Endothelial cell of umbilical vein (primary cell): ENCODE measurements at regions of chr17 and their contacts with region 1.

Region 1: GRCh38 chr17:29931231-29931932 is 1.4 kb upstream of the SSH2 start:
- DNase-seq: peak; percentile 86
- H3K4me3 ChIP-seq: peak overlapping the region in 1 of 3 experiments; percentile 66
- H3K27ac ChIP-seq: no peak overlapping the region
- H3K4me1 ChIP-seq: peaks cover 34% of the 10 kb centered on the region
- H3K27me3 ChIP-seq: no peaks in the 10 kb centered on the region
- CTCF ChIP-seq: peak; percentile 81 to 87
- POLR2A ChIP-seq: no peak

Region 2: DNA sequence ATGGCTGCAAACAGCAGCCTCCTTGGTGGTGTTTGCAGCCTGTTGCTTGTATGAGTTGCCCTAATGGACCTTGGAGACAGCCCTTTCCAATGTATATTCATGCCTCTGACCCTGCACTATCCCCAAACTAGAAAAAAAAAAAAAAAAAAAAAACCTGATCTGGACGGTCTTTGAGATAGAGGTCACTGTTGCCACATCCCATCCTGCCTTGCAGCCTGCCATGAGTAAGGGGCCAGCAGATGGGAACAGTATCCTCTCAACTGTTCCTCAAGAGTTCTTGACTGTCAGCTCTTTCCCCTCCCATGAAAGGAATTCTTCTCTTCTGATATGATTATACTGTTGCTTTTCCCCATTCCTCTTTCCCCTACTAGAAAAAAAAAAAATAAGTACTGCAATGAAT is 153.7 kb before region 1 on chr17:
- CTCF ChIA-PET with region 1: interaction called, 12 read pairs
- POLR2A ChIA-PET with region 1: interaction called, 4 read pairs
- dilution Hi-C with region 1: no loop called
- intact Hi-C with region 1: no loop called
- DNase-seq: no peak
- H3K4me3 ChIP-seq: no peak overlapping the region
- H3K27ac ChIP-seq: no peak overlapping the region
- H3K4me1 ChIP-seq: peaks cover 6% of the 10 kb centered on the region
- H3K27me3 ChIP-seq: no peaks in the 10 kb centered on the region
- CTCF ChIP-seq: no peak
- POLR2A ChIP-seq: no peak

Region 3: DNA sequence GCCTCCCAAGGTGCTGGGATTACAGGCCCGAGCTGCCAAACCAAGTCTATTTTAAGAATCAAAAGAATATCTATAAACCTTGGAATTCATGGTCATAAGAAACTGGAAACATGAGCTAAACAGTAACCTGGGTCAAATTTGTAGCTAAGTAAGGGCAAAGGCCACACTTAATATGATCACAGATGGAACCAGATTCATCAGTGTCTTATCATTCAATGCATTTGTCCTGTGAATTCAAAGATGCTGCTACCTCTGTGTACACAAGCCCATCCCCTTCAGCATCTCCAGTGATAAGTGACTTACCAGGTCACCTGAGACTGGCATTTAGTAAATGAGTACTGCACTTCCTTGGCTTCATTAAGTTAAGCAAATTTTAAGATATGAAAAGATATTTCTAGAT is 109.5 kb before region 1 on chr17:
- CTCF ChIA-PET with region 1: interaction called, 10 read pairs
- POLR2A ChIA-PET with region 1: no interaction called
- dilution Hi-C with region 1: no loop called
- intact Hi-C with region 1: no loop called
- DNase-seq: no peak
- H3K4me3 ChIP-seq: no peak overlapping the region
- H3K27ac ChIP-seq: no peak overlapping the region
- H3K4me1 ChIP-seq: no peaks in the 10 kb centered on the region
- H3K27me3 ChIP-seq: no peaks in the 10 kb centered on the region
- CTCF ChIP-seq: no peak
- POLR2A ChIP-seq: no peak

Region 4: GRCh38 chr17:29844339-29845048 is 86.9 kb before region 1 on chr17:
- CTCF ChIA-PET with region 1: interaction called, 28 read pairs
- POLR2A ChIA-PET with region 1: no interaction called
- dilution Hi-C with region 1: no loop called
- intact Hi-C with region 1: no loop called
- DNase-seq: peak; percentile 31
- H3K4me3 ChIP-seq: no peak overlapping the region
- H3K27ac ChIP-seq: no peak overlapping the region
- H3K4me1 ChIP-seq: peaks cover 7% of the 10 kb centered on the region
- H3K27me3 ChIP-seq: no peaks in the 10 kb centered on the region
- CTCF ChIP-seq: no peak
- POLR2A ChIP-seq: no peak

Region 5: DNA sequence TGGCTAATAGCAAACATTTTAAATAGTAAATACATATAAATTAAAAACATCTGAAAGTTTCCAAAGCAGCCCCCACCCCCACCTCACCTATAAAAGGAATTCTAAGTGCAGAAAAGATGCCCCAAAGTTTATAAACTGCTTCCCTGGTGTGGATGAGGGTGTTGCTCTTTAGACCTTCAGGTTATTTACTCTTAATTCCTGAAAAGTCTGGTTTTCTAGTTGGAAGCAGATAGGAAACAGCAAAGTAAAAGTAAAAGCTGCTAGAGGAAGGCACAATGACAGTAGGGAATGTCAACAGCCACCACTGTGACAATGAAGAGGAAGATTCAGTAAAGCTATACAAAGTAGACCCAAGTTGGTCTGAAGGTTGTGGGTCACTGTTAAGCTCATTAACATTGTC is 39.2 kb before region 1 on chr17:
- CTCF ChIA-PET with region 1: interaction called, 10 read pairs
- POLR2A ChIA-PET with region 1: interaction called, 3 read pairs
- dilution Hi-C with region 1: no loop called
- intact Hi-C with region 1: no loop called
- DNase-seq: no peak
- H3K4me3 ChIP-seq: no peak overlapping the region
- H3K27ac ChIP-seq: no peak overlapping the region
- H3K4me1 ChIP-seq: peaks cover 11% of the 10 kb centered on the region
- H3K27me3 ChIP-seq: no peaks in the 10 kb centered on the region
- CTCF ChIP-seq: no peak
- POLR2A ChIP-seq: no peak

Region 6: DNA sequence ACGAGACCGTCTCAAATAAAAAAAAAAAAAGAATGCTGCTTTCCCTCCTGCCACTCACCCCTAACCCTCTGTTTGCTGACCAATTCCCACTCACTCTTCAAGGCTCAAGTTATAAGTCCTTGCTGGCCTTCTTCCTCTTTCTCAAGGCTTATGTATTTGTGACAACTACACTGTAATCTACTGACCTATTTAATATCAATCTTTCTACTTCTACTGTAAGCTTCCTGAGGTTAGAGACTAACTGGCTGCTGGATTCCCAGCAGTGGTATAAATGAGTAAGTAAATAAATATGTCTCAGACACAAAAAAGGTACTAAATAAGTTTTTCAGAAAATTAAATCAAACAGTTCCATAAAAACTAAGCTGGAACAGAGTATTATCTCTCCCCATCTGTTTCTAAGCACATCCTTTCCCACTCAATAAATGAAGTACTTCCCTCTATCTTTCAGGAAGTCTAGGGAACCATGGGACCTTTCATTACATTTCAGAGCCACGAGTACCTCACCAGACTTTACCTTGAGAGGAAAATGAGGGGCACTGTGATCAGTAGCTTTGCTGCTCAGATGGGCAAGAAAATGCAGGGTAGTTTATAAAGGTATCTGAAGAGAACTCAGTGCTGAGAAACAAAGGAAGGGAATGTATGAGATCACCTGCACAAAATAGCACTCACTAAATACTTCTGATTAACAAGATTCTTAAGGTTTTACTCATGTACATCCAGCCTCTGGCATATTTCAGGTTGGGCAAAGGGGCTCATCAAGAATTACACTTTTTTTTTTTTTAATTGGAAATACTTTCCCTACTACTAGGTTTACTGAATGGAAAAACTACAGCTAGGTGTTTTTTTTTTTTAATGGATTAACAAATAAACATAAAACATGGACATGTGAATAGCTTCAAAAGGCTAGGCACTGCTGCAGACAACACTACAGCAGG is 12.2 kb before region 1 on chr17:
- CTCF ChIA-PET with region 1: interaction called, 21 read pairs
- POLR2A ChIA-PET with region 1: no interaction called
- dilution Hi-C with region 1: no loop called
- intact Hi-C with region 1: no loop called
- DNase-seq: peak; percentile 69
- H3K4me3 ChIP-seq: no peak overlapping the region
- H3K27ac ChIP-seq: peak overlapping the region; percentile 70
- H3K4me1 ChIP-seq: peaks cover 7% of the 10 kb centered on the region
- H3K27me3 ChIP-seq: no peaks in the 10 kb centered on the region
- CTCF ChIP-seq: no peak
- POLR2A ChIP-seq: no peak

Region 7: GRCh38 chr17:30093463-30094147 is 162.2 kb after region 1 on chr17:
- CTCF ChIA-PET with region 1: interaction called, 91 read pairs
- POLR2A ChIA-PET with region 1: no interaction called
- dilution Hi-C with region 1: no loop called
- intact Hi-C with region 1: loop called (anchors 10 kb)
- DNase-seq: peak; percentile 72
- H3K4me3 ChIP-seq: no peak overlapping the region
- H3K27ac ChIP-seq: no peak overlapping the region
- H3K4me1 ChIP-seq: no peaks in the 10 kb centered on the region
- H3K27me3 ChIP-seq: no peaks in the 10 kb centered on the region
- CTCF ChIP-seq: peak; percentile 52 to 80
- POLR2A ChIP-seq: no peak

Region 8: DNA sequence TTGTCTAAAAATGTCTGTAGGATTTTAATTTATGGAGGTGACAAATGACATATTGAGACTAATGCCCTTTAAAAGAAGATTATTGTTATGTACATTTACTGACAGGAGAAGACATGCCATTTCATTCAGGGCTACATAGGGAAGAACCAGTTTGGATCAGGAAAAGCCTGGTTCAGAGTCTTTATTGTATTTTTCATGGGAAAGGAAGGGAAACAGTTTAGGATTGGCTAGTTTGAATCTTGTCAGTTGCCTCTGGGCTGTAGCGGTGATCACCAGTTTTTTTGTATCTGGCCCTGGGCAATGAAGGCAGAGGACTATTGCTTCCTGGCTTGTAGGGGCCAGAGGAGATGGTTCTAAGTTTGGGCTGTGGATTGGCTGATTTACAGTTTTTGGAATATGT is 217.0 kb after region 1 on chr17:
- CTCF ChIA-PET with region 1: no interaction called
- POLR2A ChIA-PET with region 1: no interaction called
- dilution Hi-C with region 1: no loop called
- intact Hi-C with region 1: no loop called
- DNase-seq: no peak
- H3K4me3 ChIP-seq: no peak overlapping the region
- H3K27ac ChIP-seq: no peak overlapping the region
- H3K4me1 ChIP-seq: no peaks in the 10 kb centered on the region
- H3K27me3 ChIP-seq: no peaks in the 10 kb centered on the region
- CTCF ChIP-seq: no peak
- POLR2A ChIP-seq: no peak